Activated naive CD8-positive, alpha-beta T cell treated with anti-CD3 and anti-CD28 coated beads, Interleukin-2, amount 10 ng/mL, durations not matched to agents 7 days and 5 days (primary cell): ENCODE measurements at regions of chr6 and their contacts with region 1.

Region 1: GRCh38 chr6:41920921-41921711 is at the starts of genes BYSL and MED20:
- DNase-seq: peak; percentile 96
- ATAC-seq: peak; percentile 89
- H3K4me3 Mint-ChIP-seq: peak within 1 kb of the TSS; percentile 96
- H3K27ac Mint-ChIP-seq: peak within 1 kb of the TSS; percentile 96
- H3K4me1 Mint-ChIP-seq: peaks cover 38% of the 10 kb centered on the region
- H3K27me3 Mint-ChIP-seq: no peaks in the 10 kb centered on the region
- total RNA-seq, gene BYSL: 23.1 to 26.9 TPM
- total RNA-seq, gene MED20: 18.5 to 21.4 TPM

Region 2: DNA sequence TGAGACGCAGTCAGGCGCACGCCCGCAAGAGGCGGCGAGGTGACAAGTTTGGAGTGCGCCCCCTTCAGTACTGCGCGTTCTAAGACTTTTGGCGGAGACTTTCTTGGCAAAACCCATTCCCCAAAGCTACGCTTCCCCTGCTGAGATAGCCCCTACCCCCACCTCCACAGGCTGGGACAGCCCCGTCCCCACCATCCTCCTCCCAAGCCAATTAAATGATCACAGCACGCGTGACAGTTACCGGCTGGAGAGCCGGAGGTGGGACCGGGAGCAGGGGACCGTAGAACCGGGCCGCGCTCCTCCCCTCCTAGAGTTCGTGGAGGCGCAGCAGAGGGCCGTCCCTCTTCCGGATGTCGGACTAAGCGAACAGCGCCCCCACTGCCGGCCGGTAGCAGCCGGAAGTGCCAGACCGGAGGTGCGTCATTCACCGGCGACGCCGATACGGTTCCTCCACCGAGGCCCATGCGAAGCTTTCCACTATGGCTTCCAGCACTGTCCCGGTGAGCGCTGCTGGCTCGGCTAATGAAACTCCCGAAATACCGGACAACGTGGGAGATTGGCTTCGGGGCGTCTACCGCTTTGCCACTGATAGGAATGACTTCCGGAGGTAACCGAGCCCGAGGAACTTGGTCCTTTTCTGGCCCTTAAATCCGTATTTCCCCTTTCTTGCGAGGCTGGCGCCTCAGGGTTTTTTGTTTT is 133.7 kb before region 1 on chr6 and contains the start of gene TOMM6:
- POLR2A ChIA-PET with region 1: interaction called, 19 read pairs
- DNase-seq: peak; percentile 94
- ATAC-seq: peak; percentile 83
- H3K4me3 Mint-ChIP-seq: peak within 1 kb of the TSS; percentile 96
- H3K27ac Mint-ChIP-seq: peak within 1 kb of the TSS; percentile 97
- H3K4me1 Mint-ChIP-seq: peaks cover 7% of the 10 kb centered on the region
- H3K27me3 Mint-ChIP-seq: peaks cover 5% of the 10 kb centered on the region
- total RNA-seq, gene TOMM6: 157 to 163 TPM

Region 3: GRCh38 chr6:41895300-41896233 is 25.5 kb before region 1 on chr6 and contains the start of gene USP49:
- POLR2A ChIA-PET with region 1: interaction called, 10 read pairs
- DNase-seq: peak; percentile 96
- ATAC-seq: peak; percentile 94
- H3K4me3 Mint-ChIP-seq: no peak within 1 kb of the TSS
- H3K27ac Mint-ChIP-seq: peak within 1 kb of the TSS; percentile 90
- H3K4me1 Mint-ChIP-seq: peaks cover 8% of the 10 kb centered on the region
- H3K27me3 Mint-ChIP-seq: no peaks in the 10 kb centered on the region
- total RNA-seq, gene USP49: 5.8 to 6.9 TPM

Region 4: GRCh38 chr6:41954668-41955067 is 33.6 kb after region 1 on chr6:
- POLR2A ChIA-PET with region 1: no interaction called
- DNase-seq: no peak
- ATAC-seq: no peak
- H3K4me3 Mint-ChIP-seq: no peak overlapping the region
- H3K27ac Mint-ChIP-seq: no peak overlapping the region
- H3K4me1 Mint-ChIP-seq: peaks cover 21% of the 10 kb centered on the region
- H3K27me3 Mint-ChIP-seq: no peaks in the 10 kb centered on the region

Region 5: GRCh38 chr6:41966961-41967311 is 45.8 kb after region 1 on chr6:
- POLR2A ChIA-PET with region 1: no interaction called
- DNase-seq: no peak
- ATAC-seq: no peak
- H3K4me3 Mint-ChIP-seq: no peak overlapping the region
- H3K27ac Mint-ChIP-seq: no peak overlapping the region
- H3K4me1 Mint-ChIP-seq: peaks cover 47% of the 10 kb centered on the region
- H3K27me3 Mint-ChIP-seq: no peaks in the 10 kb centered on the region

Region 6: GRCh38 chr6:42043787-42044475 is 122.8 kb after region 1 on chr6:
- POLR2A ChIA-PET with region 1: interaction called, 556 read pairs
- DNase-seq: peak; percentile 95
- ATAC-seq: peak; percentile 38
- H3K4me3 Mint-ChIP-seq: peak overlapping the region; percentile 86
- H3K27ac Mint-ChIP-seq: peak overlapping the region; percentile 94
- H3K4me1 Mint-ChIP-seq: peaks cover 79% of the 10 kb centered on the region
- H3K27me3 Mint-ChIP-seq: no peaks in the 10 kb centered on the region

Region 7: DNA sequence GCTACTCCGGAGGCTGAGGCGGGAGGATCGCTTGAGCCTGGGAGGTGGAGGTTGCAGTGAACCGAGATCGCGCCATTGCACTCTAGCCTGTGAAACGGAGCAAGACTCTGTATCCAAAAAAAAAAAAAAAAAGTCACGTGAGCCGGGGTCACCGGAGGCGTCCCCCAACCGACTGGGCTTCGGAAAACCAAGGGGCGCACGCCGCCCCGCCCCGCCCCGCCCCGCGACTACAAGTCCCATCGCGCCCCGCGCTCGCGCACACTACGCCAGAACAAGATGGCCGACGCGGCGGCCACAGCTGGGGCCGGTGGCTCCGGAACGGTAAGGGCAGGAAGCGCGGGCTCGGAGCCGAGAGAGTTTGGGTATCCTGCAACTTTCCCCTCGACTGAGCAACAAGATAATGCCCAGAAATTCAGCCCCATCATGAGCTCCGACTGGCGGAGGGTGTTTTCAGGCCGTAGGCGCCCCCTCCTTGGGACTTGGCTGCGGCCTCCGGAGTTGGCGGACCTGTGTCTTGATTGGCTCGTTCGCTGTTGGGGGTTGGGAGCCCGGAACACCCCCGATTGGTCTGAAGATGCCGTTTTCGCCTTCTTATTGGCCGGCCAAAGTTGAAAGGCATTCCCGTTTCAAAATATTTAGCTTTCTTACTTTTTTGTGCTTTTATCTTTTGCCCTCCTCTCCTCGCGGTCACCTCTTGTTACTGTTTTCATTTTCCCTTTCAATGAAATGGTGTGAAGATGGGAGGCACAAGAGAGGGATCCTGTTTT is 129.3 kb after region 1 on chr6 and contains the start of gene TAF8:
- POLR2A ChIA-PET with region 1: interaction called, 556 read pairs
- DNase-seq: peak; percentile 92
- ATAC-seq: peak; percentile 75
- H3K4me3 Mint-ChIP-seq: peak within 1 kb of the TSS; percentile 97
- H3K27ac Mint-ChIP-seq: peak within 1 kb of the TSS; percentile 99
- H3K4me1 Mint-ChIP-seq: peaks cover 55% of the 10 kb centered on the region
- H3K27me3 Mint-ChIP-seq: no peaks in the 10 kb centered on the region
- total RNA-seq, gene TAF8: 46.2 to 50.4 TPM